ENCODE measurements at regions of chr1 and their contacts with region 1.

Region 1: GRCh38 chr1:186337554-186337953 is 37.5 kb downstream of the TPR start:
- DNase-seq: no peak
- H3K4me3 ChIP-seq: no peak overlapping the region
- H3K27ac ChIP-seq: no peak overlapping the region
- H3K4me1 ChIP-seq: no peaks in the 10 kb centered on the region
- CTCF ChIP-seq: no peak

Region 2: DNA sequence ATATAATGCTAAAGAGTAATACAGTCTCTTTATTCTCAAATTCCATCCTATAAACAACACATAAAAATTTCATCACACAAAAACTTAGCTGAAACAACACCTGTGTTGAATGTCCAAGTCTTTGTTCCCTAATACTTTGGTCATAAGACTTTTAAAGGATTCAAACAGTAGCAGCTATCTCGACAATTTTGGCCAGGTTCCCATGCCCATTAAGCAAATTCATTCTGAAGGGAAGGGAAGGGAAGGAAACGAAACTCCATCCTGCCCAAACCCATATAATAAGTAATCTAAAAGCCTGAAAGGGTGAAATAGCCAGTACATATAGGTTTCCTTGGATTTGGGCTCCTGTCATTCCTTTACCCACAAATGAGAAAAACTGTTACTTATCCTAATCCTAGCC is 1028.0 kb before region 1 on chr1:
- CTCF ChIA-PET with region 1: no interaction called
- POLR2A ChIA-PET with region 1: no interaction called
- intact Hi-C with region 1: loop called (anchors 10 kb)
- DNase-seq: no peak
- H3K4me3 ChIP-seq: no peak overlapping the region
- H3K27ac ChIP-seq: no peak overlapping the region
- H3K4me1 ChIP-seq: peaks cover 24% of the 10 kb centered on the region
- CTCF ChIP-seq: no peak

Region 3: DNA sequence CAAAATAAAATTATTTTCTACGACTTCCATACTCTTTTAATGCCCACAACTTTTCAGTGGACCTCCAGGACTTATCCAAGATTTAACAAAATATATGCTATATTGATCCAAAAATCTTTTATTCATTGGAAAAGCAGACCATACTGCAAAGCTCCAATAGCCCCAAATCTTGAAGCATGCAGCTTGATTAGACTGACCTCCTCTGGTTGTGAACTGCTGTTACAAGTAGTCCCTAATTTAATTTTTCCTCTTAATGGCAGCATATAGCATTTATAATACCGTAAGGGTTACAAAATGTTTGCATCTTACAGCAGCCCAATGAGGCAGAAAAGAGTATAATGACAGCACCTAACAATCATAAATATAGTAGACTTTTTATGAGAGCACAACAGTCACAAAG is 12.3 kb before region 1 on chr1:
- CTCF ChIA-PET with region 1: interaction called, 4 read pairs
- POLR2A ChIA-PET with region 1: interaction called, 9 read pairs
- intact Hi-C with region 1: loop called (anchors 2 kb)
- DNase-seq: peak; percentile 14
- H3K4me3 ChIP-seq: no peak overlapping the region
- H3K27ac ChIP-seq: no peak overlapping the region
- H3K4me1 ChIP-seq: no peaks in the 10 kb centered on the region
- CTCF ChIP-seq: peak; percentile 73